Activated CD8-positive, alpha-beta memory T cell treated with anti-CD3 and anti-CD28 coated beads, Interleukin-2, amount 10 ng/mL, durations not matched to agents 7 days and 5 days (primary cell): ENCODE measurements at regions of chr1 and their contacts with region 1.

Region 1: DNA sequence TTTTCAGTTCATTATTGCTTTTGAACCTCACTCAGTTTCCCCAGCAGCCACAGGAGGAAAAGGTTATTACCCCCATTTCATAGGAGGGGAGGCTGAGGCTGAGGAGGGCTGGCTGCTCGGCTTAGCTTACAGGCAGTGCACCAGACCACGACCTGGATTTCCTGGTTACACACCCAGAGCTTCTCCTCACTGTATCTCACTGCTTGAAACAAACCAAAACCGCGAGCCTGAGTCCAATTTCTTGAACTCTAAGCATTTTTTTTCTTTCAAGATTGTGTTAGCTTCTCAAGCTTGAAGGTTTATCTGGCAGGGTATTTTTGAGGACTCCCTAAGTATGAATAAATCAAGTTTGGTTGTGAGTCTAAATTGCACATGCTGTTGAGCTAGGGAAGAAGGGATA is 188.9 kb upstream of the EDN2 start:
- DNase-seq: peak; percentile 84
- ATAC-seq: peak; percentile 90
- H3K4me3 Mint-ChIP-seq: peak overlapping the region; percentile 57
- H3K27ac Mint-ChIP-seq: peak overlapping the region; percentile 93
- H3K4me1 Mint-ChIP-seq: peaks cover 86% of the 10 kb centered on the region
- H3K27me3 Mint-ChIP-seq: no peaks in the 10 kb centered on the region

Region 2: GRCh38 chr1:41662061-41662764 is 11.2 kb before region 1 on chr1:
- CTCF ChIA-PET with region 1: interaction called, 27 read pairs
- DNase-seq: peak; percentile 85
- ATAC-seq: peak; percentile 87
- H3K4me3 Mint-ChIP-seq: peak overlapping the region; percentile 19
- H3K27ac Mint-ChIP-seq: no peak overlapping the region
- H3K4me1 Mint-ChIP-seq: peaks cover 69% of the 10 kb centered on the region
- H3K27me3 Mint-ChIP-seq: no peaks in the 10 kb centered on the region

Region 3: DNA sequence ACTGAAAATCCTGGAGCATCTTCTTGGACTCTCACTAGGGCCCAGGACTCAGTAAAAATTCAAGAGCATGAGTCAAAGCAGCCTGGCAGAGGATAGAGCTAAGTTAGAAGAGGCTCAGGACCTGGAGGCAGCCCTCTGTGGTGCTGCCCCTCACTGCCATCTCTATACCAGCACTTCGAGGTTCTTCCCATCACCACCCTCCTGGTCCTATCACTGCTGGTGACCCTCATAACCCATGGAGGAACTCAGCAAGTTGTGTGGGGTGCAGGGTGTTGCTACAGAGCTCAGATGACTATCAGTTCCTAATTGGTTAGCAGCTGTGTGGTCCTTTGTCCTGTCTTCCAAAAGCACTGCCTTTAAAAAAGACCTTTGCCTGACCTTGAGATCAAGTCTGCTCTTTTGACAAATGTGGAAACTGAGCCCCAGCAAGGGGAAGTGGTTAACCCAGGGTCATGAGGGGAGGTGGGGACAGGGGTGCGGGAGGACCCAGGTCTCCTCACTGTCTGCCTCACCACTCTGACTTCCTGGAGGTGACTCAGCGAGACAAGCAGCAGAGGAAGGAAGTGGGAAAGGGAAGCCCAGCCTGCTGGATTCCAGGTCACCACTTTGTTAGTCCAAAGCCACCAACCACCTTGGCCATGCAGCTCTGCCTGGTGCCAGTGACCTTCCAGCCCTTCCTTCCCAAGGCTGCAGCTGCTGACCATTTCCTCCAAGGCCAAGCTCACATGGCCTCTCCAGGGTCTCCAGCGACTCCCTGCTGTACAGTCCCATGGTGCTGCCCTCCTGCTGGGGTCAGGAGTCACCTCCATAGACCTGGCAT is 10.5 kb after region 1 on chr1:
- CTCF ChIA-PET with region 1: interaction called, 32 read pairs
- DNase-seq: peak; percentile 83
- ATAC-seq: peak; percentile 70
- H3K4me3 Mint-ChIP-seq: peak overlapping the region; percentile 42
- H3K27ac Mint-ChIP-seq: peak overlapping the region; percentile 86
- H3K4me1 Mint-ChIP-seq: peaks cover 96% of the 10 kb centered on the region
- H3K27me3 Mint-ChIP-seq: no peaks in the 10 kb centered on the region

Region 4: GRCh38 chr1:42128964-42129363 is 455.6 kb after region 1 on chr1:
- CTCF ChIA-PET with region 1: no interaction called
- DNase-seq: no peak
- ATAC-seq: no peak
- H3K4me3 Mint-ChIP-seq: no peak overlapping the region
- H3K27ac Mint-ChIP-seq: no peak overlapping the region
- H3K4me1 Mint-ChIP-seq: no peaks in the 10 kb centered on the region
- H3K27me3 Mint-ChIP-seq: peaks cover 8% of the 10 kb centered on the region